BJ (cell line): ENCODE measurements at regions of chr1 and their contacts with region 1.

Region 1: GRCh38 chr1:112444269-112444668 is 48.3 kb downstream of the CTTNBP2NL start:
- DNase-seq: peak; percentile 19
- H3K4me3 ChIP-seq: no peak overlapping the region
- H3K27me3 ChIP-seq: no peaks in the 10 kb centered on the region
- CTCF ChIP-seq: no peak

Region 2: DNA sequence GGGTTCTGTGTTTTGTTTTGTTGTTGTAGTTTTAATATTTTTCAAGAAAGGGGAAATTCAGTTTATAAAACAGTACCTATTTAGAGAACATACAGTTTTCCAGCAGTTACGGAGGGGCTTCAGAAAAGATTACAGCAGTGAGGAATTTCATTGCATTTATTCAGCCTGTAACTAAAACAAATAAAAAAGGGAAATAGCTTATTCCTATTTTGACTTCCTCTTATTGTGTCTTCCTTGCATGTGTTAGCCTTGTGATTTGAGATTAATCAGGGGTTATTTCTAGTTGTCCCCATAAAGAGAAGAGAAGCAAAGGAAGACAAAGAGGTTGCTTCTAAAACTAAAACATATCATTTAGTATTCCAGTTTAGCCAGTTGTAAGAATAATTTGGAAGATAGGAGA is 13.2 kb before region 1 on chr1:
- CTCF ChIA-PET with region 1: no interaction called
- POLR2A ChIA-PET with region 1: no interaction called
- DNase-seq: no peak
- H3K4me3 ChIP-seq: no peak overlapping the region
- H3K27me3 ChIP-seq: no peaks in the 10 kb centered on the region
- CTCF ChIP-seq: no peak

Region 3: DNA sequence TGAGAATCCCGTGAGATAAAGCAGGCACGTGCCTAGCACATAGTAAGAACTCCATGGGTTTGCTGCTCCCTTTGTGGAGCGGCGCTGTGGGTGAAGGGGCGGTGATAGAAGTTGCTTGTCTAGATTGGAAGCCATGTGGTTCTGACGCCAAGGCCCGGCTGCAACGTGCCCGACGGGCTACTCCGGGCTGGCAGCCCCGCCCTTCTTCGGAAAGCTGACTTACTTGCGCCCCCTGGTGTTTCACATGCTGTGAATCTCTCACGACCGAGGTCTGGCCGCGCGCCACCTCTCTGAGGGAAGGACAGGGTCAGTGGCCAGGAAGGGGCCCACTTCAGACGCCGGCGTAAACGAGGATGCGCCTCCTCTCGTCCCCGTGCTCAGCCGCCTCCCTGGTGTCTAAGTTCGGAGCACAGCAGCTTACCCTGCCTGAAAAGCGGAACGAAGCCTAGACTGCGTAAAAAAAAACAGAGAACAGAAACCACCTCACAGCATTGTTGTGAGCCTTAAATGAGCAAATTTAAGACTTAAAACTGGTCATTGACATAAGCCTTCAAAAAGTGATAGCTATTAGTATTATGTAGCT is 21.9 kb after region 1 on chr1:
- CTCF ChIA-PET with region 1: interaction called, 18 read pairs
- POLR2A ChIA-PET with region 1: no interaction called
- DNase-seq: peak; percentile 64
- H3K4me3 ChIP-seq: peak overlapping the region; percentile 18
- H3K27me3 ChIP-seq: no peaks in the 10 kb centered on the region
- CTCF ChIP-seq: peak; percentile 85

Region 4: GRCh38 chr1:112619520-112620376 is 175.5 kb after region 1 on chr1 and contains the start of gene CAPZA1:
- CTCF ChIA-PET with region 1: interaction called, 3 read pairs
- POLR2A ChIA-PET with region 1: interaction called, 15 read pairs
- DNase-seq: peak; percentile 58
- H3K4me3 ChIP-seq: peak within 1 kb of the TSS; percentile 89
- H3K27me3 ChIP-seq: no peaks in the 10 kb centered on the region
- CTCF ChIP-seq: no peak
- polyA plus RNA-seq, gene CAPZA1: 65.1 and 165 TPM in 2 replicates